Activated CD8-positive, alpha-beta T cell treated with anti-CD3 and anti-CD28 coated beads for 36 hours (primary cell): ENCODE measurements at regions of chr7 and their contacts with region 1.

Region 1: DNA sequence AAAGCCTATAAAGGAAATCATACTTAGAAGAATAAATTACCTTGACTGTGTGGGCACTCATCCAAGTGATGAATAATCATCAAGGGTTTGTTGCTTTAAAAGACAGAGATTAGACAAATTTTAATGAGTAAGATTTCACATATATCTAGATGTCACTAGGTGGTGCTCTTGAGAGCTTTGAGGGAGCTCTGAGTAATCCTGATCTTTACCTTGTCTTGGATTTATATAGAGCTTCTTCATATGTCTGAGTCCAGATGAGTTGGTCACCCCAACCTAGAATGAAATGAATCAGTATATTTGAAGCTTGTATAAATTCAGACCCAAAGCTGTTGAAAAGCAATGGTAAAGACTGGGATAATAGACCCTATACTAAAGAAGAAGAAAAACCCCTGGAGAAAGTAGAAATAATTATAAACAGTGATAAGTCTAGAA is 3.7 kb downstream of the AGR2 start:
- DNase-seq: no peak
- ATAC-seq: peak; percentile 74
- H3K4me3 Mint-ChIP-seq: no peak overlapping the region
- H3K27ac Mint-ChIP-seq: no peak overlapping the region
- H3K4me1 Mint-ChIP-seq: no peaks in the 10 kb centered on the region
- H3K27me3 Mint-ChIP-seq: peaks cover 2% of the 10 kb centered on the region
- CTCF ChIP-seq: peak; percentile 57

Region 2: DNA sequence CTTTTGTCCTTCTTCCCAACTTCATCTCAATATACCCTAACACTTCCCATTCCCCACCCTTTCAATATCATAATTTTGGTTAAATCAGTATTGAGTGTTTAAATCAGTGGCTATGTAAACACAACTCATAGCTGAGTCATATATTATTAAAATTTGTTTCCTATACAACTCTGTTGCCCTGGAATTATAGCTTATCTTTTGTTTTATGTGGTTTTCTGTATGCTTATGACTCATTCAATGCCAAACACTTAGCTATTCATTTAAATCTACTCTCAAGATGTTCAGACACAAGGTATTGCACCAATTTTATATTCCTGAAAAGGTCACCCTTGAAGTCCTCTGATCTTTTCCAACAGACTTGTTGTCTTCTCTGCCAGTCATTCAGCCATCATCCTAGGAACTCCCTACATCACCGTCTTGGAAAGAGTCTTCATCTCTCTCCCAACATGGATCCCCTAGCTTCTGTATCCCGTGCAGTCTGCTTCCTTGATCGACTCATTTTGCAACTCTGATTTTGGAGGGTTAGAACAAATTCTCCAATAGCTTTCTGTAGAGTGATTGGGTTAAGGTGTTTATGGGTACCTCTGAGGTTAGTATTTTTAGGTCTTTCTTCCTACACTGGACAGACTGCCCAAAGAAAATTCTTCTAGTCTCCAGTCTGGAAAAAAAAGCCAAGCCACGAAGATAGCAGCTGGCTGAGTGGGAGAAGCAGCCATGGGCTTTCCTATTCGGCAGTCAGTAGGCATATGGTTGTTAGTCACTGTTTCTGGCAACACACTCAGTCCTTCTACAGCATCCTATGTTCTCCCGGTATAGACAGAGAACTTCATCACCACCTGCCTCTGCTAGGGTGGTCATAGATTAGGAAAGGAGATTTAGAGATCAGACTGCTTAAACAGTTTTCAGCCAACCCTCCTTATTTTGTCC is 481.9 kb before region 1 on chr7:
- CTCF ChIA-PET with region 1: no interaction called
- POLR2A ChIA-PET with region 1: no interaction called
- intact Hi-C with region 1: no loop called
- DNase-seq: no peak
- ATAC-seq: no peak
- H3K4me3 Mint-ChIP-seq: no peak overlapping the region
- H3K27ac Mint-ChIP-seq: no peak overlapping the region
- H3K4me1 Mint-ChIP-seq: no peaks in the 10 kb centered on the region
- H3K27me3 Mint-ChIP-seq: no peaks in the 10 kb centered on the region
- CTCF ChIP-seq: no peak

Region 3: GRCh38 chr7:16734148-16734726 is 66.9 kb before region 1 on chr7:
- CTCF ChIA-PET with region 1: no interaction called
- POLR2A ChIA-PET with region 1: no interaction called
- intact Hi-C with region 1: no loop called
- DNase-seq: no peak
- ATAC-seq: no peak
- H3K4me3 Mint-ChIP-seq: no peak overlapping the region
- H3K27ac Mint-ChIP-seq: no peak overlapping the region
- H3K4me1 Mint-ChIP-seq: no peaks in the 10 kb centered on the region
- H3K27me3 Mint-ChIP-seq: no peaks in the 10 kb centered on the region
- CTCF ChIP-seq: no peak

Region 4: GRCh38 chr7:16786257-16786656 is 14.9 kb before region 1 on chr7:
- CTCF ChIA-PET with region 1: interaction called, 16 read pairs
- POLR2A ChIA-PET with region 1: interaction called, 3 read pairs
- intact Hi-C with region 1: no loop called
- DNase-seq: no peak
- ATAC-seq: no peak
- H3K4me3 Mint-ChIP-seq: no peak overlapping the region
- H3K27ac Mint-ChIP-seq: no peak overlapping the region
- H3K4me1 Mint-ChIP-seq: no peaks in the 10 kb centered on the region
- H3K27me3 Mint-ChIP-seq: no peaks in the 10 kb centered on the region
- CTCF ChIP-seq: no peak

Region 5: GRCh38 chr7:16905300-16906044 is 104.3 kb after region 1 on chr7:
- CTCF ChIA-PET with region 1: no interaction called
- POLR2A ChIA-PET with region 1: no interaction called
- intact Hi-C with region 1: no loop called
- DNase-seq: no peak
- ATAC-seq: no peak
- H3K4me3 Mint-ChIP-seq: no peak overlapping the region
- H3K27ac Mint-ChIP-seq: no peak overlapping the region
- H3K4me1 Mint-ChIP-seq: no peaks in the 10 kb centered on the region
- H3K27me3 Mint-ChIP-seq: peaks cover 1% of the 10 kb centered on the region
- CTCF ChIP-seq: no peak